CD8-positive, alpha-beta memory T cell (primary cell): ENCODE measurements at regions of chr11 and their contacts with region 1.

Region 1: DNA sequence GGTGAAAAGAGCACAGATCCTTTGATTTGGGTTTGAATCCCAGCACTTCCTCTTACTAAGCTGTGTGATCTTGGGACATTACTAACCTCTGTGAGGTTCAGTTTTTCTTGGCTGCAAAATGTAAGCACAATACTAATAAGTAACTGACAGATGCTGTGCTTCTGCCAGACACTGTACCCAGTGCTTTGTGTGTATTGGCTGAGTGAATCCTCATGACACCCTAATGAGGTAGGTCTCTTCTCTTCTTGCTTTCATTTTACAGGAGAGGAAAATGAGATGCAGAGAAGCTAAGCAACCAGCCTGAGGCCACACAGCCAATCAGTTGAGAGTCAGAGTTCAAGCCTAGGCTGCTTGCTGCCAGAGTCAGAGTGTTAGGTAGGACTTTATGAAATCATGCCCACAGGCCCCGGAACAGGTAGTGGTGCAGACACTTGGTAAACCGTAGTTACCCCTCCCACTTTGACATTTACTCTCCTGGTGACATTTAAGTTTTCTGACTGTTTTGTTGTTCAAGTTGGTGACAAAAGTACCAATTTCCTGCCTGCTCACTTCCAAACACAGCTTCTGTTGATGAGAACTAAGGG is 21.2 kb downstream of the PTPRJ start:
- DNase-seq: peak; percentile 71 to 95 (median 92)
- H3K4me3 ChIP-seq: peak overlapping the region; percentile 42
- H3K4me3 Mint-ChIP-seq: peak overlapping the region; percentile 53 to 80 (median 72)
- H3K27ac ChIP-seq: peak overlapping the region; percentile 54
- H3K27ac Mint-ChIP-seq: peak overlapping the region; percentile 85 to 99 (median 97)
- H3K4me1 ChIP-seq: peaks cover 96% of the 10 kb centered on the region
- H3K4me1 Mint-ChIP-seq: peaks cover 82 to 96% (median 96%) of the 10 kb centered on the region in 3 donors
- H3K27me3 ChIP-seq: no peaks in the 10 kb centered on the region
- H3K27me3 Mint-ChIP-seq: no peaks in the 10 kb centered on the region

Region 2: GRCh38 chr11:47979378-47980244 is 21.9 kb before region 1 on chr11:
- CTCF ChIA-PET with region 1: interaction called, 6 read pairs
- POLR2A ChIA-PET with region 1: interaction called, 13 read pairs
- DNase-seq: no peak
- H3K4me3 ChIP-seq: no peak overlapping the region
- H3K4me3 Mint-ChIP-seq: peak overlapping the region; percentile 60 to 89 (median 76)
- H3K27ac ChIP-seq: no peak overlapping the region
- H3K27ac Mint-ChIP-seq: peak overlapping the region; percentile 8 to 81 (median 54)
- H3K4me1 ChIP-seq: peaks cover 34% of the 10 kb centered on the region
- H3K4me1 Mint-ChIP-seq: peaks cover 35 to 46% (median 38%) of the 10 kb centered on the region in 3 donors
- H3K27me3 ChIP-seq: no peaks in the 10 kb centered on the region
- H3K27me3 Mint-ChIP-seq: no peaks in the 10 kb centered on the region

Region 3: GRCh38 chr11:48013269-48013901 is 11.9 kb after region 1 on chr11:
- CTCF ChIA-PET with region 1: interaction called, 31 read pairs
- POLR2A ChIA-PET with region 1: interaction called, 36 read pairs
- DNase-seq: peak in 4 of 5 donors; percentile 52 to 77 (median 58)
- H3K4me3 ChIP-seq: peak overlapping the region; percentile 28
- H3K4me3 Mint-ChIP-seq: peak overlapping the region; percentile 28 to 76 (median 69)
- H3K27ac ChIP-seq: peak overlapping the region; percentile 79
- H3K27ac Mint-ChIP-seq: peak overlapping the region; percentile 87 to 100 (median 98)
- H3K4me1 ChIP-seq: peaks cover 95% of the 10 kb centered on the region
- H3K4me1 Mint-ChIP-seq: peaks cover 83 to 90% (median 90%) of the 10 kb centered on the region in 3 donors
- H3K27me3 ChIP-seq: no peaks in the 10 kb centered on the region
- H3K27me3 Mint-ChIP-seq: no peaks in the 10 kb centered on the region

Region 4: DNA sequence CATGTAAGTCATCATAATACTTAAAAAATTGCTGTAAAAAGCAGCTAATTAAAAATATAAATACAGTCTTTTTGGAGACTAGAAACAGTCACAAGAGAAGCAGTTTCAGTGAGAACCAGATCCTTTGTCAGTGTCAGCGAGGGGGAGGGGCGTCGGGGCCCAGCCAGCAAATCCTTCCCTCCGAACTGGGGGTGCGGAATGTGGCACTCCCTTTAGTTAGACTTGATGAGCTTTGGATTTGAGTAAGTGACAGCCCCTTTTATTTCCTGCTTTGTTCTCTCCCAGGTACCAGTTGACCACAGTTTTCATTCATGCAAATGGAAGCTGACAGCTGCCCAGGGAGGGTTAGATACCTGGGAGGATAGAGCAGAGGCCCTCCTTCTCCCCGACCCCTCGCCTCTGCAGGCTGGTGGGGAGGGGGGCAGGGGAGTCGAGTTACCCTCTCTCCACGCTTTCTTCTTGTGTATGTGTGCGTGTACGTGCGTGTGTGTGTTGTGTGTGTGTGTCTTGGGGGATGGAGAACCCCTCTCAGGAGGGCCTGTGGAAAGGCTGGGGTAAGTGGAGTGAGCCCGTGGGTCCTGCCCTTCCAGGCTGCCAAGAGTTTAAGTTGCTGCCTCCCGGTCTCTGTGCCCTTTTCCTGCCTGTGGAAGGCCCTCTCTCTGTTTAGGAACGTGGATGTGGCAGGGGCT is 17.1 kb after region 1 on chr11:
- CTCF ChIA-PET with region 1: interaction called, 31 read pairs
- POLR2A ChIA-PET with region 1: interaction called, 36 read pairs
- DNase-seq: no peak
- H3K4me3 ChIP-seq: peak overlapping the region; percentile 22
- H3K4me3 Mint-ChIP-seq: peak overlapping the region in 6 of 7 donors; percentile 53 to 89 (median 55)
- H3K27ac ChIP-seq: peak overlapping the region; percentile 25
- H3K27ac Mint-ChIP-seq: peak overlapping the region; percentile 37 to 100 (median 92)
- H3K4me1 ChIP-seq: peaks cover 72% of the 10 kb centered on the region
- H3K4me1 Mint-ChIP-seq: peaks cover 82 to 87% (median 86%) of the 10 kb centered on the region in 3 donors
- H3K27me3 ChIP-seq: no peaks in the 10 kb centered on the region
- H3K27me3 Mint-ChIP-seq: no peaks in the 10 kb centered on the region

Region 5: GRCh38 chr11:48055292-48056132 is 54.0 kb after region 1 on chr11:
- CTCF ChIA-PET with region 1: interaction called, 17 read pairs
- POLR2A ChIA-PET with region 1: interaction called, 12 read pairs
- DNase-seq: peak; percentile 16 to 77 (median 67)
- H3K4me3 ChIP-seq: peak overlapping the region; percentile 42
- H3K4me3 Mint-ChIP-seq: peak overlapping the region; percentile 29 to 89 (median 72)
- H3K27ac ChIP-seq: peak overlapping the region; percentile 54
- H3K27ac Mint-ChIP-seq: peak overlapping the region; percentile 61 to 94 (median 80)
- H3K4me1 ChIP-seq: peaks cover 87% of the 10 kb centered on the region
- H3K4me1 Mint-ChIP-seq: peaks cover 71 to 89% (median 89%) of the 10 kb centered on the region in 3 donors
- H3K27me3 ChIP-seq: no peaks in the 10 kb centered on the region
- H3K27me3 Mint-ChIP-seq: no peaks in the 10 kb centered on the region

Region 6: GRCh38 chr11:48109046-48109666 is 107.6 kb after region 1 on chr11:
- CTCF ChIA-PET with region 1: interaction called, 11 read pairs
- POLR2A ChIA-PET with region 1: interaction called, 3 read pairs
- DNase-seq: peak in 2 of 5 donors; percentile 23 to 24
- H3K4me3 ChIP-seq: peak overlapping the region; percentile 46
- H3K4me3 Mint-ChIP-seq: peak overlapping the region; percentile 40 to 89 (median 78)
- H3K27ac ChIP-seq: no peak overlapping the region
- H3K27ac Mint-ChIP-seq: peak overlapping the region; percentile 67 to 95 (median 91)
- H3K4me1 ChIP-seq: peaks cover 37% of the 10 kb centered on the region
- H3K4me1 Mint-ChIP-seq: peaks cover 46 to 56% (median 50%) of the 10 kb centered on the region in 3 donors
- H3K27me3 ChIP-seq: no peaks in the 10 kb centered on the region
- H3K27me3 Mint-ChIP-seq: no peaks in the 10 kb centered on the region